ENCODE measurements at regions of chr11 and their contacts with region 1.

Region 1: DNA sequence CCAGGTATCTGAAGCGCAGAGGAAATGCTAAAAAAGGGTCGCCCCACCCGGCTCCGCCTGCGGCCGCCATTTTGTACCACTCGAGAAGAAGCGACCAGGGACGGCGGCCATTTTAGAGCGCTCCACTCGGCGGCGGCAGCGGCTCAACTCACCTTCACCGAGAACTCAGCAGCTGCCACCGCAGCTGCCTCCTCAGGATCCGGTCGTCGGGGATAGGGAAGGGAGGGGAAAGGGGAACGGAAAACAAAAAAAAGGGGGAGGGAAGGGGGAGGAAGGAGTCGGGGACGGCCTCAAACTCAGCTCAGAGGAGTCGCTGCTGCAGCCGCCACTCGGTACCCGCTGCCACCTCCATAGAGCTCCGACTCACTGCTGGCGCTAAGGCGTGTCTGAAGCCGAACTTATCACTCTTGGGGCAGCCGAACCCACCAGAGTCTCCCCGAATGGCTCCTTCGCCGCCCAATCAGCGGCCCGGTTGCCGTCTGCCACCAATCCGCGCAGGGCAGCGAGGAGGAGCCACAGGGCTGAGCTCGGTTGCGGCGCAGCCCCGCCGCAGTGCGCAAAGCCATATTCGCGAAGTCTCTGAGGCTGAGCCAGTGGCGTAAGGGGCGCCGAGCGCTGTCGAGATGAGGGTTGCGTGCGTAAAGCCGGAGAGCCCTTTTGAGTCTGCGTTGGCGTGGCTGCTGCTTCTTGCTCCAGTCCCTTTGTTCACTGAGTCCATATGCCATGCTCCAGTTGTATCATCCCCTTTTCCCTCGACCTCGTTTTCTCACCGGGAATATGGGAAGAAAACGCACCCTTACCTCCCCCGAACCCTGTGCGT is at the start of gene EIF4G2:
- DNase-seq: peak; percentile 95 to 99 (median 98)
- ATAC-seq: peak; percentile 90
- H3K4me3 ChIP-seq: peak within 1 kb of the TSS; percentile 85 to 87
- H3K4me3 Mint-ChIP-seq: peak within 1 kb of the TSS; percentile 97
- H3K27ac ChIP-seq: peak within 1 kb of the TSS; percentile 92 to 96
- H3K27ac Mint-ChIP-seq: peak within 1 kb of the TSS; percentile 99
- H3K4me1 ChIP-seq: peaks cover 47% of the 10 kb centered on the region
- H3K4me1 Mint-ChIP-seq: peaks cover 45% of the 10 kb centered on the region
- H3K27me3 ChIP-seq: no peaks in the 10 kb centered on the region
- H3K27me3 Mint-ChIP-seq: no peaks in the 10 kb centered on the region
- CTCF ChIP-seq: no peak
- total RNA-seq, gene EIF4G2: 1,089 to 1,144 TPM

Region 2: GRCh38 chr11:10293423-10294289 is 515.1 kb before region 1 on chr11 and contains the start of gene SBF2:
- CTCF ChIA-PET with region 1: no interaction called
- POLR2A ChIA-PET with region 1: no interaction called
- intact Hi-C with region 1: loop called in 1 of 2 experiments (anchors 10 kb)
- DNase-seq: peak; percentile 60 to 90 (median 80)
- ATAC-seq: peak; percentile 67
- H3K4me3 ChIP-seq: peak within 1 kb of the TSS; percentile 50 to 67
- H3K4me3 Mint-ChIP-seq: peak within 1 kb of the TSS; percentile 78
- H3K27ac ChIP-seq: no peak within 1 kb of the TSS
- H3K27ac Mint-ChIP-seq: no peak within 1 kb of the TSS
- H3K4me1 ChIP-seq: peaks cover 23% of the 10 kb centered on the region
- H3K4me1 Mint-ChIP-seq: peaks cover 32% of the 10 kb centered on the region
- H3K27me3 ChIP-seq: peaks cover 6 to 12% of the 10 kb centered on the region in 2 experiments
- H3K27me3 Mint-ChIP-seq: peaks cover 17% of the 10 kb centered on the region
- CTCF ChIP-seq: no peak
- total RNA-seq, gene SBF2: 12.6 to 14.3 TPM

Region 3: GRCh38 chr11:10750838-10751580 is 57.8 kb before region 1 on chr11 and contains the start of gene CTR9:
- CTCF ChIA-PET with region 1: no interaction called
- POLR2A ChIA-PET with region 1: interaction called, 15 read pairs
- intact Hi-C with region 1: loop called (anchors 1 kb)
- DNase-seq: peak; percentile 77 to 95 (median 90)
- ATAC-seq: peak; percentile 85
- H3K4me3 ChIP-seq: peak within 1 kb of the TSS; percentile 93 to 98
- H3K4me3 Mint-ChIP-seq: peak within 1 kb of the TSS; percentile 97
- H3K27ac ChIP-seq: peak within 1 kb of the TSS; percentile 66 to 81
- H3K27ac Mint-ChIP-seq: peak within 1 kb of the TSS; percentile 94
- H3K4me1 ChIP-seq: peaks cover 14% of the 10 kb centered on the region
- H3K4me1 Mint-ChIP-seq: peaks cover 33% of the 10 kb centered on the region
- H3K27me3 ChIP-seq: no peaks in the 10 kb centered on the region
- H3K27me3 Mint-ChIP-seq: no peaks in the 10 kb centered on the region
- CTCF ChIP-seq: no peak
- total RNA-seq, gene CTR9: 45.9 to 49.2 TPM

Region 4: DNA sequence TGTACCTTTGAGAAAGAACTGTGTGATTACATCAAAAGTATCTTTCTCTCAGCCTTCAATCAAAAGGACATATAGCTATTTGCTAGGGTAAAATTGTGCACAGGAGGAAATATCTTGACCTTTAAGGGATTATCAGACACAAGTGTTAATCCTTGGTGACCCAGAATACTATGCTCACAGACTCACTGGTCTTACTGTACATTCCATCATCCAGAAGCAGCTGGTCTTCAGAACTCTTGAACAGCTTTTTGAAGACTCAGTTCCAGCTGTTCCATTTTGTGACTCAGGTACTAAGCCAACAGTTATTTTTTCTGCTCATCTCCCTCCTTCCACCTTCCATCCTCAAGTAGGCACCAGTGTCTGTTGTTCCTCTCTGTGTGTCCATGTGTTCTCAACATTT is 29.3 kb after region 1 on chr11:
- CTCF ChIA-PET with region 1: no interaction called
- POLR2A ChIA-PET with region 1: interaction called, 15 read pairs
- intact Hi-C with region 1: no loop called
- DNase-seq: no peak
- ATAC-seq: no peak
- H3K4me3 ChIP-seq: no peak overlapping the region
- H3K4me3 Mint-ChIP-seq: no peak overlapping the region
- H3K27ac ChIP-seq: no peak overlapping the region
- H3K27ac Mint-ChIP-seq: no peak overlapping the region
- H3K4me1 ChIP-seq: no peaks in the 10 kb centered on the region
- H3K4me1 Mint-ChIP-seq: peaks cover 7% of the 10 kb centered on the region
- H3K27me3 ChIP-seq: no peaks in the 10 kb centered on the region
- H3K27me3 Mint-ChIP-seq: no peaks in the 10 kb centered on the region
- CTCF ChIP-seq: no peak

Region 5: GRCh38 chr11:10878408-10879214 is 69.8 kb after region 1 on chr11:
- CTCF ChIA-PET with region 1: interaction called, 6 read pairs
- POLR2A ChIA-PET with region 1: interaction called, 14 read pairs
- intact Hi-C with region 1: loop called in 1 of 2 experiments (anchors 1 kb)
- DNase-seq: peak in 3 of 9 experiments; percentile 33 to 79 (median 73)
- ATAC-seq: peak; percentile 75
- H3K4me3 ChIP-seq: no peak overlapping the region
- H3K4me3 Mint-ChIP-seq: no peak overlapping the region
- H3K27ac ChIP-seq: no peak overlapping the region
- H3K27ac Mint-ChIP-seq: no peak overlapping the region
- H3K4me1 ChIP-seq: peaks cover 5% of the 10 kb centered on the region
- H3K4me1 Mint-ChIP-seq: peaks cover 18% of the 10 kb centered on the region
- H3K27me3 ChIP-seq: no peaks in the 10 kb centered on the region
- H3K27me3 Mint-ChIP-seq: no peaks in the 10 kb centered on the region
- CTCF ChIP-seq: peak; percentile 75

Region 6: GRCh38 chr11:11841723-11842420 is 1033.1 kb after region 1 on chr11 and contains the start of gene USP47:
- CTCF ChIA-PET with region 1: interaction called, 5 read pairs
- POLR2A ChIA-PET with region 1: interaction called, 23 read pairs
- intact Hi-C with region 1: loop called (anchors 5 kb)
- DNase-seq: peak; percentile 90 to 98 (median 94)
- ATAC-seq: peak; percentile 79
- H3K4me3 ChIP-seq: peak within 1 kb of the TSS; percentile 77 to 92
- H3K4me3 Mint-ChIP-seq: no peak within 1 kb of the TSS
- H3K27ac ChIP-seq: peak within 1 kb of the TSS; percentile 92 to 95
- H3K27ac Mint-ChIP-seq: no peak within 1 kb of the TSS
- H3K4me1 ChIP-seq: peaks cover 37% of the 10 kb centered on the region
- H3K4me1 Mint-ChIP-seq: peaks cover 26% of the 10 kb centered on the region
- H3K27me3 ChIP-seq: no peaks in the 10 kb centered on the region
- H3K27me3 Mint-ChIP-seq: peaks cover 6% of the 10 kb centered on the region
- CTCF ChIP-seq: peak; percentile 46
- total RNA-seq, gene USP47: 93.4 to 100 TPM